ENCODE measurements at regions of chr10 and their contacts with region 1.

Region 1: DNA sequence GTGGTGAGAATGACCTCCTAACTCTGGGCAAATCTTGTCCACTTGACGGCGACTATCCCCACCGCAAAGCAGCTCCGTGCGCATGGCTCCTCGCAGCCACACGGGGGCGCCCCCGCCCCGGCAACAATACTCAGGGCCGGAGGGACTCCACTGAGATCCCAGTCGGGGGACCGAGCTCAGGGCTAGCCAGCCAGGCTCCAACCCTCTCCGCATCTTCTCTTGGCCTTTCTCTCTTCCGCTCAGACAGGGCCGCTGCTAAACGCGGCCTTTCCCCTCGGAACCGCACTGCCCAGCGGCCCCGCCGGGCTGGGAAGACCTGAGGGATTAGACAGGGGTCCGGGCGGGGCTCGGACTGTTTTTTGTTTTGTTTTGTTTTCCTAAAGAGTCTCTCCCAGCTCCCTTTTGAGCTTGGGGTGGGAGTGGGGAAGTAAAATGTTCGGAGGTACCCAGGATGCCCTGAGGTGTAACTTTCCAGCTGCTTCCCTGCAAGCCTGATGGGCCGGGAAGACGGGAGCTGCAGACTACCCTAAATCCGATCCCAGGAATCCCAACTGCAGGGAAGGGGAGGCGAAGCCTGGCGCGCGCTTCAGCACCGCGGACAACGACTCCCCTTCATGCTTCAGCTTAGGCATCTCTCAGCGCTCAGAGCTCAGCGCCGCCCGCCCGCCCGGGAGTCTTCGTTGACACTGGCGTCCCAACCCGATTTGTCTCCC is 2.7 kb downstream of the KCNIP2 start:
- DNase-seq: peak; percentile 82 to 91 (median 87)
- H3K4me3 ChIP-seq: peak overlapping the region in 2 of 4 donors; percentile 33 to 64
- H3K27ac ChIP-seq: no peak overlapping the region
- H3K4me1 ChIP-seq: peaks cover 14 to 37% of the 10 kb centered on the region in 2 donors
- H3K27me3 ChIP-seq: no peaks in the 10 kb centered on the region
- CTCF ChIP-seq: peak; percentile 87 to 94 (median 92)
- POLR2A ChIP-seq: no peak

Region 2: DNA sequence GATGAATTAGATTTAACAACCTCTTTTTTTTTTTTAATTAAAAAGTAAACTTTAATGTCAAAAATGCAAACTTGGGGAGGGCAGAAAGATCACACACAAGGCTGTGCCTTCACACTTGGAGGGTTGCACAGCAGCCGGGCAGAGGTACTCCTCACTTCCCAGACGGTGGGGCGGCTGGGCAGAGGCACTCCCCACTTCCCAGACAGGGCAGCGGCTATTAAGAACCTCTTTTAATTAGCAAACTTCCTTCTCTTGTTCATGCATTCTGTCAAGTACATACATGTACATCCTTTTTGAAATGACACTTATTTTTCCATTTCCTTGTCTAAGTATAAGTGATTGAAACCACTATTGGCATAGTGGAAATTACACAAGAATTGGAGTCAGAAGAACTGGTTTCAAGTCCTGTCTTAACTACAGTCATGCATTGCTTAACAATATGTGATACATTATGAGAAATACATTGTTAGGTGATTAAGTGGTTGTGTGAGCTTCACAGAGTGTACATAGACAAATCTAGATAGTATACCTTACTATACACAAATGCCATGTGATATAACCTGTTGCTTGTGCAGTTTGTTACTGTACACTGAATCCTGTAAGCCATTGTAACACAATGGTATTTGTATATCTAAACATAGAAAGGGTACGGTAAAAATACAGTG is 460.4 kb before region 1 on chr10:
- intact Hi-C with region 1: no loop called
- DNase-seq: no peak
- H3K4me3 ChIP-seq: no peak overlapping the region
- H3K27ac ChIP-seq: no peak overlapping the region
- H3K4me1 ChIP-seq: peaks cover under 1 to 17% of the 10 kb centered on the region in 2 donors
- H3K27me3 ChIP-seq: no peaks in the 10 kb centered on the region
- CTCF ChIP-seq: no peak
- POLR2A ChIP-seq: no peak

Region 3: GRCh38 chr10:101485681-101486554 is 355.0 kb before region 1 on chr10:
- intact Hi-C with region 1: no loop called
- DNase-seq: peak in 1 of 7 donors; percentile 78
- H3K4me3 ChIP-seq: no peak overlapping the region
- H3K27ac ChIP-seq: peak overlapping the region in 1 of 5 donors; percentile 45
- H3K4me1 ChIP-seq: peaks cover 0 to 7% of the 10 kb centered on the region in 2 donors
- H3K27me3 ChIP-seq: no peaks in the 10 kb centered on the region
- CTCF ChIP-seq: no peak
- POLR2A ChIP-seq: no peak

Region 4: GRCh38 chr10:101716851-101717659 is 123.8 kb before region 1 on chr10:
- intact Hi-C with region 1: no loop called
- DNase-seq: no peak
- H3K4me3 ChIP-seq: no peak overlapping the region
- H3K27ac ChIP-seq: no peak overlapping the region
- H3K4me1 ChIP-seq: no peaks in the 10 kb centered on the region
- H3K27me3 ChIP-seq: peaks cover 6% of the 10 kb centered on the region
- CTCF ChIP-seq: no peak
- POLR2A ChIP-seq: no peak

Region 5: GRCh38 chr10:101889256-101890210 is 48.6 kb after region 1 on chr10:
- intact Hi-C with region 1: loop called in 1 of 2 experiments (anchors 5 kb)
- DNase-seq: peak; percentile 69 to 94 (median 89)
- H3K4me3 ChIP-seq: no peak overlapping the region
- H3K27ac ChIP-seq: no peak overlapping the region
- H3K4me1 ChIP-seq: no peaks in the 10 kb centered on the region
- H3K27me3 ChIP-seq: no peaks in the 10 kb centered on the region
- CTCF ChIP-seq: peak; percentile 77 to 90 (median 83)
- POLR2A ChIP-seq: no peak

Region 6: GRCh38 chr10:101952191-101952590 is 111.3 kb after region 1 on chr10:
- intact Hi-C with region 1: no loop called
- DNase-seq: no peak
- H3K4me3 ChIP-seq: no peak overlapping the region
- H3K27ac ChIP-seq: no peak overlapping the region
- H3K4me1 ChIP-seq: no peaks in the 10 kb centered on the region
- H3K27me3 ChIP-seq: no peaks in the 10 kb centered on the region
- CTCF ChIP-seq: no peak
- POLR2A ChIP-seq: no peak

Region 7: GRCh38 chr10:102009801-102010425 is 169.0 kb after region 1 on chr10:
- intact Hi-C with region 1: loop called (anchors 2 to 5 kb)
- DNase-seq: peak; percentile 59 to 85 (median 71)
- H3K4me3 ChIP-seq: no peak overlapping the region
- H3K27ac ChIP-seq: no peak overlapping the region
- H3K4me1 ChIP-seq: peaks cover 13 to 18% of the 10 kb centered on the region in 2 donors
- H3K27me3 ChIP-seq: no peaks in the 10 kb centered on the region
- CTCF ChIP-seq: peak; percentile 78 to 98 (median 97)
- POLR2A ChIP-seq: no peak

Region 8: DNA sequence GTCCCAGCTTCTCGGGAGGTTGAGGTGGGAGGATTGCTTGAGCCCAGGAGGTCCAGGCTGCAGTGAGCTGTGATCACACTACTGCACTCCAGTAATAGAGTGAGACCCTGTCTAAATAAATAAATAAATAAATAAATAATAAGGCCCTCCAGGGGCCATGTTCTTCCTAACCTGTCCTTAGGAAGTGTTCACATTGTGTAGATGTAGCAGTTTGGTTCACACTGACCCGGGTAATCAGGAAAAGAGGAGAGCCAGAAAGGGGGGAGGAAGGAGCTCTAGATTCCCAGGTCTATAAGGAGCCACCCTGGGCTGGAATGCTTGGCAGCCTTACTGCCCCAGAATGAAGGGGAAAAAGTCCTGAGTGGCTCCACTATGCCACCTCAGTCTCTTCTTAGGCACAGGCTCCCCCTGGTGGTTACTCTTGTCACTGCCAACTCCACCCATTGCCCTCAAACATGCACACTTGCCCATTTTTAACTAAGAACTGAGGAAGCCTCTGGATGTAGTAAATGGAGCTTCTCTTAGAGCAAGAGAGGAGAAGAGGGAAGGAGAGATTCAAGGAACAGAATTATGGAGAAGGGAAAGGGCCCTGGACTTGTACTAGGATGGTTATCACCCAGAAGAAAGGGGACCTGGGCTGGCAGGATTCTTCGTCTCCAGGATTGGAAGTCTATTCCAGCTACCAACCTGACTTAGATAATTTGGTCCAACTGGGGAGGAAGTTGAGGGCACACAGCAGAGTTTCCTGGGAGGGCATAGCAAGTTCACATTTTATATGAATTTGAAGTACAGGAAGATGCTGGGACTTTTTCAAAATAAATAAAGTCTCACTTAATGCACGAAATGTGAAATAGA is 232.0 kb after region 1 on chr10:
- intact Hi-C with region 1: loop called (anchors 5 to 10 kb)
- DNase-seq: peak; percentile 73 to 94 (median 85)
- H3K4me3 ChIP-seq: no peak overlapping the region
- H3K27ac ChIP-seq: no peak overlapping the region
- H3K4me1 ChIP-seq: no peaks in the 10 kb centered on the region
- H3K27me3 ChIP-seq: no peaks in the 10 kb centered on the region
- CTCF ChIP-seq: peak; percentile 90 to 94 (median 91)
- POLR2A ChIP-seq: no peak